ENCODE measurements at regions of chr9 and their contacts with region 1.

Region 1: DNA sequence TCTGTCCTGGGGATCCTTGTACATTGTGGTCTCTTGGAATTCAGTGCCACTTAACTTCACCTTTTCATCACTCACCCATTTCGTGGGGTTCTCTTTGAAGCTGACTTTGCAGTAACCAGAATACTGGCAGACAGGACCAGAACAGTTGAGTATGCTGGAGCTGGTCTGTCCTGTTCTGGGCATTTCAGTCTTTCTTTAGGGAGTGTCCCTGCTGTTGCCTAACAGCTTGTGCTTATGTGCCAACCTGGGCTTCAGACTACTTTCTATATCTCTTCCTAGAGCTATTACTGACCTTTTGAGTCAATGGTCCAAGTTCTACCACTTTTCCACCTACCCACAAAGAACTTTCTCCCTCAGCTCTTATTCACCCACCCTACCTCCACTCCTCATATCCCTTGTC is 10.0 kb upstream of the INSL6 start:
- DNase-seq: no peak
- ATAC-seq: no peak
- H3K4me3 ChIP-seq: no peak overlapping the region
- H3K27ac ChIP-seq: no peak overlapping the region
- H3K4me1 ChIP-seq: no peaks in the 10 kb centered on the region
- H3K27me3 ChIP-seq: no peaks in the 10 kb centered on the region
- CTCF ChIP-seq: no peak

Region 2: GRCh38 chr9:5231212-5231611 is 35.8 kb after region 1 on chr9 and contains the start of gene INSL4:
- intact Hi-C with region 1: loop called in 1 of 2 experiments (anchors 5 kb)
- DNase-seq: no peak
- ATAC-seq: no peak
- H3K4me3 ChIP-seq: no peak within 1 kb of the TSS
- H3K27ac ChIP-seq: no peak within 1 kb of the TSS
- H3K4me1 ChIP-seq: no peaks in the 10 kb centered on the region
- H3K27me3 ChIP-seq: peaks cover 0 to 2% (median 0%) of the 10 kb centered on the region in 3 donors
- CTCF ChIP-seq: no peak
- total RNA-seq, gene INSL4: not detected

Region 3: DNA sequence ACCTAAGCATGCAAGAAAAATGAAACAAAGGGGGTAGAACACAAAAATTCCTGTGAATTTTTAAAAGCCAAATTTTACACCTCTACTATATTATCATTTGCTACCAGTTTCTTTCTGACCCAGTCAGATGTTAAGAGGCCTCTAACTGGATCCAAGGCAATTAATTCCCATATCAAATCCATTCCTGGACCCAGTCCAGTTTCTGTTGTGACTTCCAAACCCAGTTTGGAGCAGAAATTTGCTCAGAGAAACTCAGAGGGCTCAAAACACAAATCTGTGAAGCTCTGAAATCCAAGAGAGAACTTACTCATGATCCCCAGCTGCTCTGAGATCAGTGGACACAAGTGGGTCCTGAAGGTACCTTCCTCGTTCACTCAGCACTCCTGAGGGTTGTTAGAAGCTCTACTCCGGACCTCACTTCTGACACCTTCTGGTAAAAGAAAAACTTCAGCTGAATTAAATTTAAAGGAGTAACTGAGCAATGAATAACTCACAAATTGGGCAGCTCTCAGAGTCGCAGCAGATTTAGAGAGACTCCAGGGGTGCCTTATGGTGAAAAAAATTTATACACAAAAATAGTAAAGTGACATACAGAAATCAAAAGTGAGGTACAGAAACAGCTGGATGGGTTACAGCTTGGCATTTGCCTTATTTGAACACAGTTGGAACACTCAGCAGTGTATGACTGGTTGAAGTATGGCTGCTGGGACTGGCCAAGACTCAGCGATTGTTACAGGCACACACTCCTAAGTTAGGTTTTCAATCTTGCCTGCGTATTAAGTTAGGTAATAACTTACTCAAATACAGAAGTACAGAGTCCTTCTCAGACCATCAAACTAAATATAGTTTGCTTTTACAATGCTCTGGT is 68.1 kb after region 1 on chr9:
- intact Hi-C with region 1: loop called in 1 of 2 experiments (anchors 10 kb)
- DNase-seq: no peak
- ATAC-seq: no peak
- H3K4me3 ChIP-seq: no peak overlapping the region
- H3K27ac ChIP-seq: no peak overlapping the region
- H3K4me1 ChIP-seq: no peaks in the 10 kb centered on the region
- H3K27me3 ChIP-seq: no peaks in the 10 kb centered on the region
- CTCF ChIP-seq: peak; percentile 4

Region 4: DNA sequence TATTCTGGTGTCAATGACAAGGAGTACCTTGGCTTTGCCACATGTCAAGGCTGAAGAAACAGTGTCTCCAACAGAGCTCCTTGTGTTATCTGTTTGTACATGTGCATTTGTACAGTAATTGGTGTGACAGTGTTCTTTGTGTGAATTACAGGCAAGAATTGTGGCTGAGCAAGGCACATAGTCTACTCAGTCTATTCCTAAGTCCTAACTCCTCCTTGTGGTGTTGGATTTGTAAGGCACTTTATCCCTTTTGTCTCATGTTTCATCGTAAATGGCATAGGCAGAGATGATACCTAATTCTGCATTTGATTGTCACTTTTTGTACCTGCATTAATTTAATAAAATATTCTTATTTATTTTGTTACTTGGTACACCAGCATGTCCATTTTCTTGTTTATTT is 274.7 kb after region 1 on chr9:
- intact Hi-C with region 1: no loop called
- DNase-seq: no peak
- ATAC-seq: peak in 2 of 4 donors; percentile 27 to 37
- H3K4me3 ChIP-seq: no peak overlapping the region
- H3K27ac ChIP-seq: no peak overlapping the region
- H3K4me1 ChIP-seq: no peaks in the 10 kb centered on the region
- H3K27me3 ChIP-seq: no peaks in the 10 kb centered on the region
- CTCF ChIP-seq: no peak

Measured in psoas muscle (tissue), 8 donors.